ENCODE measurements at regions of chr19 and their contacts with region 1.

Region 1: DNA sequence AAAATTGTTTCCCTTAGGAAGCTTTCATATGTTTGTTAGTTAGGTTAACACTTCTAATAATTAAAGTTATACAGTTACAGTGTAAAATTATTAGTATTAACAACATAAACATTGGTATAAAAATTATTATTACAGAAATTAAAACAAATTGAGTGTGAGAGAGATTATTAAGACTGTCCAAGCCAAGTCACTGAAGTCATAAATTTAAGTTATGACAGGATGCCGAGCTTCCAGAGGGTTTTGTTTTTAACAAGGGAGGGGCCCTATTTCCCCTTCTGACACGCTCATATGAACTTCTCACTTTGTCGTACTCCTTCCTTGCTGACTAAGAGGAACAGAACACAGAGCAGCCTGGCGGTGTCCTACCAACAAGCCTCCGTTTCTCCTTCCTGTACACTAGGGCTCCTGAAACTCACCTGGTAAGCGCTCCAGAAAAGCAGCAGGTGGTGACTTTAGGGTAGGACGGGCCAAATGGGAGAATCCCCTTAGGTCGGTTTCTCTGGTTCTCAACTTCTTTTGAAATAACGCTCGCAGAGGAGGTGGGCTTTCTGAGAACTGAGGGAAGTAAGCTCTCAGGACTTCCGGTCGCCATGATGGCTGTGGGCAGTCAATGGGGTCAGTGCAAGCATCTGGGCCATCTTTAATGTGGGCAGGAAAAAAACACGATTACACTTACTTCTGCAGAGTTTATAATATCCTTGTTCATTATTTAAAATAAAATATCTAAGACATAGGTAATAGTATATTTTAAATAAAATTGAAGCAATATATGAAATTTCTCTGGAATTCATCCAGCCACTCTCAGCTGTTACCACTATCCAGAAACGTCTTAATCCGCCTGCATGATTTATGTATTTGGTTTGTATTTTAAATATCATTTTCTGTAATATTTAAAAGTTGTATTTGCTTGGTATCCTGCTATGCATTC is at the start of gene CARD8:
- DNase-seq: peak; percentile 88 to 92
- ATAC-seq: peak; percentile 95
- H3K4me3 ChIP-seq: peak within 1 kb of the TSS; percentile 78 to 99
- H3K27ac ChIP-seq: peak within 1 kb of the TSS in 1 of 2 donors; percentile 100
- H3K4me1 ChIP-seq: no peaks in the 10 kb centered on the region
- H3K27me3 ChIP-seq: no peaks in the 10 kb centered on the region
- total RNA-seq, gene CARD8: 46.5 to 116 TPM

Region 2: GRCh38 chr19:48203732-48204628 is 51.7 kb before region 1 on chr19:
- intact Hi-C with region 1: loop called in 1 of 2 experiments (anchors 10 kb)
- DNase-seq: peak; percentile 95 to 97
- ATAC-seq: peak; percentile 99
- H3K4me3 ChIP-seq: peak overlapping the region; percentile 48 to 55
- H3K27ac ChIP-seq: peak overlapping the region in 1 of 2 donors; percentile 61
- H3K4me1 ChIP-seq: no peaks in the 10 kb centered on the region
- H3K27me3 ChIP-seq: no peaks in the 10 kb centered on the region

Region 3: DNA sequence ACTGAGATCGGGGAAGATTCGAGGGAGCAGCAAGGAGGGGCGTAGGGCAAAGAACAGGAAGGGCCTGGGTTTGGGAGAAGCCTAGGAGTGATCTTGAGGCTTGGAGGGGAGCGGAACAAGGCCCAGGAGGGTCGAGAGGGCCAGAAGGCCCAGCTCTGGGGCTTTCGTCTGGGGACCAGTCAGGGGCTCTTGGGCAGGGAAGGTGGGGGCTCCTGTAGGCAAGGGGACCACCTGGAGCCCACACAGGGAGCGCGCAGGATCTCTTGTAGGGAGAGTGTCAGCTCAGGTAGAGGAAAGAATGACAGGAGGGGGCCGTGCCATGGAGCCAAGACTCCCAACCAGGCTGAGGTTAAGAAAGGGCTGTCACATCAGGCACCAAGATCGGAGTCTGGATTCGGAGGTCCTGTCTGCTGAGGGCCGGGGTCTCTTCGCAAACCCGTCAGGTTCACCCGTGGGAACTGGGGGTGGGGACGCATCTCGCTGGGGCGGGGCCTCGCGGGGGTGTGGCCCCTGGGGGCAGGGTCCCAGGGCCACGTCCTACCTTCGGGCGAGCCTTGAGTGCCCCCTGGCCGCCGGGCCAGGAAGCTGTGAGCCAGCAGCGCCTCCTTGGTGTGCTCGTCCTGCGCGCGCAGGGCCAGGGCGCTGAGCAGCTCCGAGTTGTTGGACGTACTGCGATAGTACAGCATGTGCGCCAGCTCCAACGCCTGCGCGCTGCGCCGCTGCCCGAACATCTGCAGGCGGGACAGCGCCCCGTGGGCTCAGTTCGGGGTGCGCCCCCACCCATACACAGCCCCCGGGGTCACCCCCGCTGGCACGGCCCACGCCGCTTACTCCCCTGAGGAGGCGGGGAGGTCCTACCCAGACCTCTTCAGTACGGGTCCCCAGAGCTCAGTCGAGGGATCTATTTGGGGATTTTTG is 78.1 kb after region 1 on chr19:
- intact Hi-C with region 1: loop called in 1 of 2 experiments (anchors 10 kb)
- DNase-seq: peak; percentile 96
- ATAC-seq: peak; percentile 93
- H3K4me3 ChIP-seq: no peak overlapping the region
- H3K27ac ChIP-seq: peak overlapping the region in 1 of 2 donors; percentile 41
- H3K4me1 ChIP-seq: no peaks in the 10 kb centered on the region
- H3K27me3 ChIP-seq: no peaks in the 10 kb centered on the region